T-cell (primary cell): ENCODE measurements at regions of chr1 and their contacts with region 1.

Region 1: GRCh38 chr1:117674521-117675397 is 68.9 kb downstream of the TENT5C start:
- DNase-seq: peak in 34 of 35 experiments; percentile 35 to 79 (median 57)
- ATAC-seq: peak; percentile 75 to 91 (median 80)
- H3K4me3 ChIP-seq: no peak overlapping the region
- H3K4me3 Mint-ChIP-seq: no peak overlapping the region
- H3K27ac ChIP-seq: no peak overlapping the region
- H3K27ac Mint-ChIP-seq: peak overlapping the region in 1 of 2 donors; percentile 11
- H3K4me1 ChIP-seq: peaks cover 0 to 13% of the 10 kb centered on the region in 2 experiments
- H3K4me1 Mint-ChIP-seq: peaks cover 0 to 22% (median 11%) of the 10 kb centered on the region in 3 donors
- H3K27me3 ChIP-seq: peaks cover 0 to 17% of the 10 kb centered on the region in 2 experiments
- H3K27me3 Mint-ChIP-seq: no peaks in the 10 kb centered on the region

Region 2: DNA sequence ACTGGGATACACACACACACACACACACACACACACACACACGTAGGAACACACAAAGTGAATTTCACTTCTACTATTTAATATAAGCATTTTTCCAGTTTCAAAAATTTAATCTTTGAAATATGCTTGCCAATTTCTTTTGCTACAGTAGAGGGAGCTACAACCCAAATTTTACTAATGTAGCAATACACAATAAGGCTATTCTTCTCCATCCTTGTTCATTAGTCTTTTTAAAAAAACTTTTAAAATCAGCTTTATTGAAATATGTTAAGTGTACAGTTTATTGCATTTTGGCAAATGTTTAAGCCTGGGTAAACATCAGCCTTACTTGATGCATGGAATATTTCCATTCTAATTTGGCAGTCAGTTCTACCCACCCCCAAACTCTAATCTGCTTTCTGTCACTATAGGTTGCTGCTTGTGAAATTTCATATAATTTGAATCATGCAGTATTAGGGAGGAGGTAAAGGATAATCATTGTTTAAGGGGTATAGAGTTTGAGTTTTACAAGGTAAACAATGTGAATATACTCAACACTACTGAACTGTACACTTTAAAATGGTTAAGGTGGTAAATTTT is 161.9 kb before region 1 on chr1:
- CTCF ChIA-PET with region 1: interaction called, 8 to 13 read pairs
- POLR2A ChIA-PET with region 1: no interaction called
- DNase-seq: peak in 1 of 35 experiments; percentile 54
- ATAC-seq: no peak
- H3K4me3 ChIP-seq: no peak overlapping the region
- H3K4me3 Mint-ChIP-seq: no peak overlapping the region
- H3K27ac ChIP-seq: no peak overlapping the region
- H3K27ac Mint-ChIP-seq: no peak overlapping the region
- H3K4me1 ChIP-seq: no peaks in the 10 kb centered on the region
- H3K4me1 Mint-ChIP-seq: no peaks in the 10 kb centered on the region
- H3K27me3 ChIP-seq: no peaks in the 10 kb centered on the region
- H3K27me3 Mint-ChIP-seq: no peaks in the 10 kb centered on the region

Region 3: DNA sequence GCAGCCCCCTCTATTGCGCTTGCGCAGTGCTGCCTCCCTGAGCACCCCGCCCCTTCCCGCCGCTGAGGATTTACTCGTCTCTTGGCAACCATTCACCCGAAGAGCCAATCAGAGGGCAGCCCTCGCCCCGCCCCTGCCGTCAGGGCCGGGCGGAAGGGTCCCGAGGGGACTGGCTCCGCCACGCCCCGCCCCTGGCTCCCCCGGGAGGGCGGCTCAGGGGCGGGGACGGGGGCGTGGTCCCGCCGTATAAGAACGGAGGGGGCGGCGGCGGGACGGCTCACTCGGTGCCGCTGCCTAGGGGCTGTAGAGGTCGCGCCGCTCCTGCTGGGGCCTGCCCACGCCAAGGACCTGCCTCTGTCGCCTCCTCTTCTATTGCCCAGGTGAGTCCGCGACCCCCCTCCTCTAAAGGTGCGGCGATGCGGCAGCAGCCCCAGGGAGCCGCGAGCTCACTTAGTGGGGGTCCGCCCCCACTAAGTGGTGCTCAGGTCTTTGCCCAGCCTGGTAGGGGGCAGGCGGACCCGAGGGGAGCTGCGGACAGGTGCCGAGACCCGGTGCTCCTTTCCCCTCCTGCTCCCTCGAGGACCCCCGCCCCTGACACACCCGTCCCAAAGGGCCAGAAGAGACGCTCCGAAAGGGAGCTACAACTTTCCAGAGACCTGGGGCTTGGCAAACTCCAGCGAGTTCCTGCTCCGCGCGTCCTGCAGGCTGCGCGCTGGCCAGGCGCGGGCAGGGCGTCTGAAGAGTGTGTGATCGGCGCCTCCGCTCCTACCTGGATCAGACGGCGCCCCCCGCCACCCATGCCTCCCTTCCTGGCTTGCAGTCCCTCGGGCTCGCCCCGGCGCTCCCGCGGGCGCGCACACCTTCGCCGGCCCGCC is 68.7 kb before region 1 on chr1 and contains the start of gene TENT5C:
- CTCF ChIA-PET with region 1: interaction called, 8 to 19 read pairs
- POLR2A ChIA-PET with region 1: interaction called, 5 to 9 read pairs
- DNase-seq: peak; percentile 96 to 99 (median 98)
- ATAC-seq: peak; percentile 90 to 96 (median 92)
- H3K4me3 ChIP-seq: peak within 1 kb of the TSS; percentile 91 to 92
- H3K4me3 Mint-ChIP-seq: peak within 1 kb of the TSS; percentile 97 to 98 (median 98)
- H3K27ac ChIP-seq: peak within 1 kb of the TSS; percentile 94
- H3K27ac Mint-ChIP-seq: peak within 1 kb of the TSS; percentile 95 to 98
- H3K4me1 ChIP-seq: peaks cover 11 to 32% of the 10 kb centered on the region in 2 experiments
- H3K4me1 Mint-ChIP-seq: peaks cover 41 to 52% (median 45%) of the 10 kb centered on the region in 3 donors
- H3K27me3 ChIP-seq: peaks cover 2% of the 10 kb centered on the region in 2 experiments
- H3K27me3 Mint-ChIP-seq: no peaks in the 10 kb centered on the region
- total RNA-seq, gene TENT5C: 7.6 to 133 (median 11.2) TPM

Region 4: GRCh38 chr1:117612517-117613248 is 62.1 kb before region 1 on chr1:
- CTCF ChIA-PET with region 1: interaction called, 8 to 19 read pairs
- POLR2A ChIA-PET with region 1: interaction called, 9 to 10 read pairs
- DNase-seq: no peak
- ATAC-seq: no peak
- H3K4me3 ChIP-seq: no peak overlapping the region
- H3K4me3 Mint-ChIP-seq: no peak overlapping the region
- H3K27ac ChIP-seq: peak overlapping the region; percentile 3
- H3K27ac Mint-ChIP-seq: no peak overlapping the region
- H3K4me1 ChIP-seq: peaks cover 1 to 66% of the 10 kb centered on the region in 2 experiments
- H3K4me1 Mint-ChIP-seq: peaks cover 59 to 92% (median 87%) of the 10 kb centered on the region in 3 donors
- H3K27me3 ChIP-seq: no peaks in the 10 kb centered on the region
- H3K27me3 Mint-ChIP-seq: no peaks in the 10 kb centered on the region

Region 5: DNA sequence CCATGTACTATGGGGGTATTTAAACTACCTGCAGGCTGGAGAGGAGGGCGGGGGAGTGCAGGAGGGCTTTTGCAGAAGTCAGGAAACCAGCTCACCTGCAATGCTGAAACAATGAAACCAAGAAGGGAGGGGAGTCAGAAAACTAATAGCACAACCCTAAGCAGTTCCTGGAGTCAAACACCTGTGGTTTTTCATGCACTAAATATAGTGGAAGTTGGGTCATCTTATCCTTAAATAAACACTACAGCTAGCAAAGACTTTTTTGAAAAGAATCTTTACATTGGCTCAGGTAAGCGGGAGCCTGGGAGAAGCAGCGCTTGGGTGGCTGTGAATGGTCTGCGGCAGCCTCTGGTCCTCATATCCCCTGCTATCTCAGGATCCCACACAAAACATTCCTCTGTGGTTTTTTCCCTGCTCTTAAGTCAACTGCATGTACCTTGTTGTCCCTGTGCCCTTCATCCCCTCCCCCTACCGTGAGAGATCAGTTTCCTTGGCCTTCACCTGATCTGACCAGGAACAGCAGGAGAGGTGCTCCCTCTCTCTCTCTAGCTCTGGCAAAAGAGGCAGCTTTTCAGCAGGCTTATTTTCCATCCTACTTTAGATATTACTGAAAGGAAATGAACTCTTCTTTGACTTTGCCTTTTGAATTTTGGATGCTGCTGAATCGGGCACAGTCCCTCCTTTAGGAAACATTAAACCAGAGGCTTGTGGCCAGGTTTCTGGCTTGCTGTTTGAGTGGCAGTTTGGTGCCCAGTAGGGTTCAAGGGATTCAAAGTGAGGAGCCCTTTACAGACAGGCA is 42.3 kb before region 1 on chr1:
- CTCF ChIA-PET with region 1: interaction called in 1 of 2 experiments, 11 read pairs
- POLR2A ChIA-PET with region 1: no interaction called
- DNase-seq: no peak
- ATAC-seq: no peak
- H3K4me3 ChIP-seq: no peak overlapping the region
- H3K4me3 Mint-ChIP-seq: no peak overlapping the region
- H3K27ac ChIP-seq: no peak overlapping the region
- H3K27ac Mint-ChIP-seq: peak overlapping the region in 1 of 2 donors; percentile 41
- H3K4me1 ChIP-seq: peaks cover 0 to 11% of the 10 kb centered on the region in 2 experiments
- H3K4me1 Mint-ChIP-seq: peaks cover 33 to 48% (median 35%) of the 10 kb centered on the region in 3 donors
- H3K27me3 ChIP-seq: no peaks in the 10 kb centered on the region
- H3K27me3 Mint-ChIP-seq: peaks cover 0 to 15% of the 10 kb centered on the region in 2 donors

Region 6: GRCh38 chr1:117654493-117655219 is 20.1 kb before region 1 on chr1:
- CTCF ChIA-PET with region 1: interaction called, 4 to 11 read pairs
- POLR2A ChIA-PET with region 1: interaction called in 1 of 2 experiments, 4 read pairs
- DNase-seq: peak in 2 of 35 experiments; percentile 28 to 55
- ATAC-seq: peak in 1 of 4 experiments; percentile 22
- H3K4me3 ChIP-seq: peak overlapping the region in 1 of 2 donors; percentile 11
- H3K4me3 Mint-ChIP-seq: peak overlapping the region; percentile 31 to 77 (median 49)
- H3K27ac ChIP-seq: peak overlapping the region; percentile 61
- H3K27ac Mint-ChIP-seq: peak overlapping the region; percentile 69 to 71
- H3K4me1 ChIP-seq: peaks cover 53 to 96% of the 10 kb centered on the region in 2 experiments
- H3K4me1 Mint-ChIP-seq: peaks cover 84 to 91% (median 89%) of the 10 kb centered on the region in 3 donors
- H3K27me3 ChIP-seq: peaks cover 0 to 9% of the 10 kb centered on the region in 2 experiments
- H3K27me3 Mint-ChIP-seq: peaks cover 2 to 7% of the 10 kb centered on the region in 2 donors

Region 7: DNA sequence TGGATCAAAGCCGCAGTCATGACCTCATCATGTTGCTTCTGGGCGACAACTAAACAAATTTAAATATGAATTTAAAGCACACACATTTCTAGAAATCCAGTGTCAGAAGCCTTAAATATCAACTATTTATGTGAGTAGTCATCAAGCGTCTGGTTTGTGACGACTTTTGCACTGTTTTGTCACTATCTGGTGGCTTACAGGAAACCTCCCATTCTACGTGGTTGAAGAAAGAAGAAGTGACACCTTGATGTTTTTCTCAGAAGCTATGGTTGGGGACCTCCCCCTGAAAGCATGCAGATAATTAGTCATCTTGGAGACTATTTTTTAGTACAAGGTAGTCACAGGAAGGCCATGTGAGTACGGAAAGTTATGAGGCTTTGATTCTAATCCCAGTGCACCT is 10.4 kb before region 1 on chr1:
- CTCF ChIA-PET with region 1: interaction called, 5 to 10 read pairs
- POLR2A ChIA-PET with region 1: interaction called in 1 of 2 experiments, 3 read pairs
- DNase-seq: peak in 33 of 35 experiments; percentile 30 to 91 (median 65)
- ATAC-seq: peak; percentile 84 to 92 (median 92)
- H3K4me3 ChIP-seq: no peak overlapping the region
- H3K4me3 Mint-ChIP-seq: peak overlapping the region in 1 of 3 donors; percentile 42
- H3K27ac ChIP-seq: peak overlapping the region; percentile 93
- H3K27ac Mint-ChIP-seq: peak overlapping the region; percentile 90 to 92
- H3K4me1 ChIP-seq: peaks cover 25 to 69% of the 10 kb centered on the region in 2 experiments
- H3K4me1 Mint-ChIP-seq: peaks cover 66 to 84% (median 79%) of the 10 kb centered on the region in 3 donors
- H3K27me3 ChIP-seq: peaks cover 0 to 5% of the 10 kb centered on the region in 2 experiments
- H3K27me3 Mint-ChIP-seq: peaks cover 0 to 4% of the 10 kb centered on the region in 2 donors

Region 8: GRCh38 chr1:117929173-117929989 is 254.6 kb after region 1 on chr1 and contains the starts of genes GDAP2 and WDR3:
- CTCF ChIA-PET with region 1: no interaction called
- POLR2A ChIA-PET with region 1: no interaction called
- DNase-seq: peak; percentile 88 to 99 (median 97)
- ATAC-seq: peak; percentile 96 to 97 (median 97)
- H3K4me3 ChIP-seq: peak within 1 kb of the TSS; percentile 91 to 98
- H3K4me3 Mint-ChIP-seq: peak within 1 kb of the TSS; percentile 90 to 98 (median 95)
- H3K27ac ChIP-seq: peak within 1 kb of the TSS; percentile 86
- H3K27ac Mint-ChIP-seq: peak within 1 kb of the TSS; percentile 85 to 94
- H3K4me1 ChIP-seq: peaks cover 21 to 26% of the 10 kb centered on the region in 2 experiments
- H3K4me1 Mint-ChIP-seq: peaks cover 64 to 71% (median 71%) of the 10 kb centered on the region in 3 donors
- H3K27me3 ChIP-seq: no peaks in the 10 kb centered on the region
- H3K27me3 Mint-ChIP-seq: no peaks in the 10 kb centered on the region
- total RNA-seq, gene GDAP2: 19.9 to 26.4 (median 23.3) TPM
- total RNA-seq, gene WDR3: 12.2 to 32.8 (median 26.2) TPM